ENCODE measurements at regions of chr16 and their contacts with region 1.

Region 1: DNA sequence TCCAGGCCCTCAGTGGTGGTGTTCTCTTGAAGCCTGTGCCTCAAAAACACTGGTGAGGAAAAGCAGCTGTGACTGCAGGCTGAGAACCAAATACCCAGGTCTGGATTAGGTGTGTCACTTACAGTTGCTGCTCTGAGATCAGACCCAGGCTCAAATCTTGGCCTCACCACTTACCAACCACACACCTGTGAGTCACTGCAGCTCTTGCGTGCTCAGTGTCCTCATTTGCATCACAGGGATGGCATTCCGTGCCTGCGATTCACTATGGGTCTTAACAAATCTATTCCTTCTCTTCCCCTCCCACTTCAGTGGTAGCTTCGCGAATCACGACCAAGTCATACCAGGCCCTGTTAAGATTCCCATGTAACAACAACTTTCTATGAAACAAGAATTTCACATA is 233.4 kb upstream of the HSBP1 start:
- DNase-seq: peak; percentile 95
- H3K4me3 ChIP-seq: no peak overlapping the region
- H3K27ac ChIP-seq: no peak overlapping the region
- H3K4me1 ChIP-seq: peaks cover 9% of the 10 kb centered on the region
- H3K27me3 ChIP-seq: no peaks in the 10 kb centered on the region
- CTCF ChIP-seq: no peak

Region 2: GRCh38 chr16:83807710-83808572 is 233.6 kb after region 1 on chr16 and contains the start of gene HSBP1:
- CTCF ChIA-PET with region 1: no interaction called
- dilution Hi-C with region 1: no loop called
- in situ Hi-C with region 1: no loop called
- intact Hi-C with region 1: loop called (anchors 1 kb)
- DNase-seq: peak; percentile 86
- H3K4me3 ChIP-seq: peak within 1 kb of the TSS; percentile 84 to 94 (median 92)
- H3K27ac ChIP-seq: peak within 1 kb of the TSS; percentile 60
- H3K4me1 ChIP-seq: peaks cover 4% of the 10 kb centered on the region
- H3K27me3 ChIP-seq: no peaks in the 10 kb centered on the region
- CTCF ChIP-seq: no peak
- total RNA-seq, gene HSBP1: 17.7 to 130 TPM

Measured in mammary epithelial cell (primary cell).